CD4-positive, alpha-beta T cell (primary cell): ENCODE measurements at regions of chr12 and their contacts with region 1.

Region 1: DNA sequence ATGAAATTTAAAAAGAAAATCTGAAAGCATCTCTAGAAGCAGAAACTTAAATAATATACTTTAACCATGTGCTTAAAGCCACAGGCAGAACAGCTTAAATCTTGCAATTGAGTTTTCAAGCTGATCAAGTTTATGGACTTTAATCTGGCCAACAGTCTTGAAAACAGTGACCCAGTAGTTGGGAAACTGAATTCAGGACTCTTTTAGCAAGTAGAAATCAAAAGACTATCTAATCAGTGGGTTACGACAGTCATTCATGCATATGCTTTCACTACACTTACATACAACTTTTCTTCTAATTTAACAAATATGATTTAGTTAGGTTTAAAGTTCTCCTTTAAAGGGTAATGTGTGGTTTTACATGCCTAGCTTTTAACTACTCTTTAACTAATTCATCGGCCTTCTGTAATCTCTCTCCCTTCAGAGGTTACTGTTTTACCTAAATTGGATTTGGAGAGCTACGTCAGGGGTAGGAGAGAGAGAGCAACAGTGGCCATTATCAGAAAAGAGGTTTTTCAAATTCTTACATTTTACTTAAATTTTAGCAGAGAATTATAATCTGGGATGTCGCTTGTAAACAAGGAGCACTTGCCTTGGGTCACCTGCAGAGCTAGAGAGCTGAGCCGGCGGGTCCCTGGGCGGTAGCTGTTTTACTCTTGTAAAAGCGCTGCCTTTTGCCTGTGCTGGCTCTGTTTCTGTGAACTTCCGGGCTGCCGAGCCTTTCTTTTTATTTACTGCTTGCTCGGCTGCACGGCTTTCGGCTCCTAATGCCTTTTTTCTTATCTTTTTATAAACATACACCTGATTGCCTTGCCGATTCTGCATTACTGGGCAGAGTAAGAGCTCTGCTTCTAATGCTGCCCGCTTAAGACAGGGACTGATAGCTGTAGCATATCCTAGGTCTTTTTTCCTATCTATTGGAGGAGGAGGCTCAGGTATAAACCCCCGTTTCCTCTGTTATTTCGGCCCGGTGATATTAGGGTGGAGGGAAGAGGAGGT is 17.4 kb upstream of the LYZ start:
- DNase-seq: peak; percentile 49 to 81 (median 66)
- ATAC-seq: peak; percentile 74
- H3K4me3 ChIP-seq: peak overlapping the region; percentile 61
- H3K4me3 Mint-ChIP-seq: peak overlapping the region; percentile 98
- H3K27ac ChIP-seq: peak overlapping the region; percentile 83 to 88
- H3K27ac Mint-ChIP-seq: peak overlapping the region; percentile 100
- H3K4me1 ChIP-seq: peaks cover 34% of the 10 kb centered on the region
- H3K4me1 Mint-ChIP-seq: peaks cover 62% of the 10 kb centered on the region
- H3K27me3 ChIP-seq: no peaks in the 10 kb centered on the region
- H3K27me3 Mint-ChIP-seq: no peaks in the 10 kb centered on the region
- CTCF ChIP-seq: no peak

Region 2: GRCh38 chr12:69254046-69254445 is 76.7 kb before region 1 on chr12:
- CTCF ChIA-PET with region 1: no interaction called
- POLR2A ChIA-PET with region 1: interaction called, 10 read pairs
- intact Hi-C with region 1: no loop called
- DNase-seq: peak in 3 of 14 experiments; percentile 71 to 84 (median 82)
- ATAC-seq: peak; percentile 91
- H3K4me3 ChIP-seq: no peak overlapping the region
- H3K4me3 Mint-ChIP-seq: no peak overlapping the region
- H3K27ac ChIP-seq: peak overlapping the region in 1 of 2 donors; percentile 8
- H3K27ac Mint-ChIP-seq: peak overlapping the region; percentile 19
- H3K4me1 ChIP-seq: no peaks in the 10 kb centered on the region
- H3K4me1 Mint-ChIP-seq: peaks cover 56% of the 10 kb centered on the region
- H3K27me3 ChIP-seq: no peaks in the 10 kb centered on the region
- H3K27me3 Mint-ChIP-seq: no peaks in the 10 kb centered on the region
- CTCF ChIP-seq: peak; percentile 74

Region 3: DNA sequence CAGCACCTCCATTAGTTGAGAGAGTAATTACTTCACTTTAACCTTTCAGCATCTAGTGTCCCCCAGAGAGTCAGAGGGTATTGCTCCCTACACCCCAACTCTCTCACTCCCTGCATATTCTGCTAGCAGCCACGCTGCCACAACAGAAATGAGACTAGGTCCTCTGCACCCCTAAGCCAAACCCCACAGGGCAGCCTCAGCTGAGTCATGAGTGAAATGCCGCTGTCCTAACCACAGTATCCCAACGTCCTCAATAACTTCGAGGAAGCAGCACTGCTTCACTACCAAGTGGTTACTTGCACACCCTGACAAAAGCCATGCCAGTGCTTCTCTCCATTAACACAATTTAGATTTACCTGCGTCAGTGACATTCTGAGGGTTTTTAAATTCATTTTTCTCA is 10.6 kb after region 1 on chr12:
- CTCF ChIA-PET with region 1: interaction called, 4 read pairs
- POLR2A ChIA-PET with region 1: interaction called, 20 read pairs
- intact Hi-C with region 1: no loop called
- DNase-seq: peak in 2 of 14 experiments; percentile 36 to 38
- ATAC-seq: no peak
- H3K4me3 ChIP-seq: no peak overlapping the region
- H3K4me3 Mint-ChIP-seq: no peak overlapping the region
- H3K27ac ChIP-seq: no peak overlapping the region
- H3K27ac Mint-ChIP-seq: no peak overlapping the region
- H3K4me1 ChIP-seq: no peaks in the 10 kb centered on the region
- H3K4me1 Mint-ChIP-seq: no peaks in the 10 kb centered on the region
- H3K27me3 ChIP-seq: no peaks in the 10 kb centered on the region
- H3K27me3 Mint-ChIP-seq: peaks cover 4% of the 10 kb centered on the region
- CTCF ChIP-seq: no peak

Region 4: GRCh38 chr12:69470189-69471075 is 139.7 kb after region 1 on chr12 and contains the start of gene FRS2:
- CTCF ChIA-PET with region 1: no interaction called
- POLR2A ChIA-PET with region 1: interaction called, 20 read pairs
- intact Hi-C with region 1: no loop called
- DNase-seq: peak; percentile 68 to 90 (median 82)
- ATAC-seq: peak; percentile 98
- H3K4me3 ChIP-seq: peak within 1 kb of the TSS; percentile 77
- H3K4me3 Mint-ChIP-seq: peak within 1 kb of the TSS; percentile 100
- H3K27ac ChIP-seq: peak within 1 kb of the TSS; percentile 63 to 72
- H3K27ac Mint-ChIP-seq: peak within 1 kb of the TSS; percentile 92
- H3K4me1 ChIP-seq: peaks cover 12% of the 10 kb centered on the region
- H3K4me1 Mint-ChIP-seq: peaks cover 55% of the 10 kb centered on the region
- H3K27me3 ChIP-seq: no peaks in the 10 kb centered on the region
- H3K27me3 Mint-ChIP-seq: no peaks in the 10 kb centered on the region
- CTCF ChIP-seq: no peak
- total RNA-seq, gene FRS2: 21.7 to 24.9 TPM

Region 5: DNA sequence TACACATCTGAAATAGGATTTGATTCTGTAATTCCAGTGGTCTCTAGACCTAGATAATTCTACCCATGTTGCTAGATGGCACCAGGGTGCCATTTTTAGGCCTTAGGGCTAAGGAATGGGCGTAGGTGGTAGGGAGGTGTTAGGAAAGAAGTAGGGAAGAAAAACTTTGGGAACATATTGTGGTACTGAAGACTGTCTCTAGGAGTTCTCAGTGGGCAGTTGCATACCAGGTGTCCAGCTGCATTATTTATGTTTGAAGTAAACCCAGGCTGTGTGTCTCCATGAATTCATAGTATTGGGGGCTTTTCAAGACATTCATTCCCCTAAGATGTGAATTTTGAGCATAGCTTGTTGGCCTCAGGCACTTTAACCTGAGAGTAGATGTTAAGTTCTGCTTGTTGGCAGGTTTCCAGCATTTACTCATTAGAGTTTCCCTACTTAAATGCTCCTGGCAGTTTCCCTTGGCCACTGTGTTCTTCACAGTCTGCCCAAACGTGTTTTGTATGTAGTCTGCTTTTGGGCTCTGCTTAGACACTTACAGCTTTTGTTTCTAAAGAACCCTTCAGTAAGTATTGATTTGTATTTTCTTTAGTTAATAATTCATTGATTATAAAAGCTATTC is 223.0 kb after region 1 on chr12:
- CTCF ChIA-PET with region 1: no interaction called
- POLR2A ChIA-PET with region 1: no interaction called
- intact Hi-C with region 1: no loop called
- DNase-seq: no peak
- ATAC-seq: no peak
- H3K4me3 ChIP-seq: no peak overlapping the region
- H3K4me3 Mint-ChIP-seq: no peak overlapping the region
- H3K27ac ChIP-seq: no peak overlapping the region
- H3K27ac Mint-ChIP-seq: no peak overlapping the region
- H3K4me1 ChIP-seq: no peaks in the 10 kb centered on the region
- H3K4me1 Mint-ChIP-seq: no peaks in the 10 kb centered on the region
- H3K27me3 ChIP-seq: no peaks in the 10 kb centered on the region
- H3K27me3 Mint-ChIP-seq: no peaks in the 10 kb centered on the region
- CTCF ChIP-seq: no peak

Region 6: DNA sequence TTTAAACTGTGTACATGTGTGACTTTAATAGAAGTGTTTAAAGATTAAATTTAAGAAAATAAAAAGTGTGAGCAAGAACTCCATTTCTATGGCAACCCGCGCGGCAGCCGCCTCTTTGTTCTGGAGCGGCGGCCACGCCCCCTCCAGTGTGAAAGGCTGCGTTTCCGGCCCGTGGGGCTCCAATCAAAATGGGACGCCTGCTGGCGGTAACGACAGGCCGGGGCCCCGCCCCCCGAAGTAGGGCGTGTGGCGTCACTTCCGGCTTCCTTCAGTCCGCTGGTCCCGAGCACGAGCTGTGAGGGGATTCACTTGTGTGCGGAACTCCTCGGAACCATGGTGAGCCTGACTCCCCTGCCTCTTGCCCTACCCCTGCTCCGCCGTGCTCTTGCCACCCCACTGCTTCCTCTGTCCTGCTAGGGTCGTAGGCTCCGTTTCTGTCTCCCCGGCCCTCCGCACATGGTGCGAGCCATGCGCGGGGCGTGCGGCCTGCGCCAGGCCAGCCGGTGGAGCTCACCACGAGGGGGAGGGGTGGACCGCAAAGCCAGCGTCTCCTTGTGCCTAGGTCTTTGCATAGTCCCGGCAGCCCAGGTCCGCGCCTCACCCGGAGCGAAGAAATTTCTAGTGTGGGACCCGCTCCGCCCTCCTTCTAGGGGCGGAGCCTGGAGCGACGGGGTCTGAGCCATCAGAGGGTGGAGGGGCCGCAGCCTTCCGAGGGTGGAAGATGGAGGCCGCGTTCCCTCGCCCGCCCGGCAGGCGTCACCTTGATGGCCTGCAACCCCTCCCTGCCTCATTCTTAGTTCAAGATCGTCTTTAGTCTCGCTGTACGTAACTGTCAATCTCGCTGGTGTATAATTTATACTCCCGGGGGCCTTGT is 254.7 kb after region 1 on chr12 and contains the start of gene CCT2:
- CTCF ChIA-PET with region 1: no interaction called
- POLR2A ChIA-PET with region 1: interaction called, 30 read pairs
- intact Hi-C with region 1: no loop called
- DNase-seq: peak; percentile 92 to 99 (median 96)
- ATAC-seq: peak; percentile 87
- H3K4me3 ChIP-seq: peak within 1 kb of the TSS; percentile 98
- H3K4me3 Mint-ChIP-seq: peak within 1 kb of the TSS; percentile 99
- H3K27ac ChIP-seq: peak within 1 kb of the TSS; percentile 96 to 97
- H3K27ac Mint-ChIP-seq: peak within 1 kb of the TSS; percentile 98
- H3K4me1 ChIP-seq: peaks cover 12% of the 10 kb centered on the region
- H3K4me1 Mint-ChIP-seq: peaks cover 27% of the 10 kb centered on the region
- H3K27me3 ChIP-seq: no peaks in the 10 kb centered on the region
- H3K27me3 Mint-ChIP-seq: no peaks in the 10 kb centered on the region
- CTCF ChIP-seq: peak; percentile 28
- total RNA-seq, gene CCT2: 173 to 177 TPM

Region 7: DNA sequence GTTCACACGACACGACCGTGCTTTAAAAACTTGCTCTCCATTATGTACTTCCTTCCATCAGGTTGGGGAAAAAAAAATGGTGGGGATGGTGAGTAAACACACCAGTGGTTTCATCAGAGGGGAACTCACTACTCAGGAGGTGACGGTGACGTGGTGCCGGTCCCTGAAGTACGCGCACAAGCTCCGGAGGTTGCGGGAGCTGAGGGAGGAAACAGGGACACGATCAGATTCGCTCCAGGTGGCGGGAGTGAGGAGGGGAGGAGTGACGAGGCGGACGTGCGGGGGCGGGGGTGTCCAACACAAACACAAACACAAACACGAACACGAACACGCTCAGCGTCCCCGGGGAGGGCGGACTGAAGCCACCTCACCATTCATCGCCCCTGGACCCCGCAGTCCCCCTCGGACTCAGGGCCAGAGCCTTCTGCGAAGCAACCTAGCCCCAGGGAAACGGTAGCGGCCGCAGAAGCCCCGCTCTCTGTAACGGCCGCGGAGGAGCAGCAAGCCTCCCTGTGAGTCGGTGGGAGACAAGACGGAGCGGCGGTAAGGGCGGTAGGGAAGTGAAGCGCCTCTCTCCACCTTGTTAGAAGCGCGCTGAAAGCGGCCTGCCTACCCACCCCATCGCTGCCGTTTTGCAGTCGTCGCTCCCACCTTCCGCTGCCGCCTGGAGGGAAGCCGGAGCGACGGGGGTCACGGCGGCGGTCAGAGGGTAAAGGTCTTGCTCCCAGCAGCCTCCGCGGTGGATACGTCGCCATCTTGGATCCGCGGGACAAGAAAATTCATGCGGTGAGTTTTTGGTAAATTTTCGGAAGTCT is 912.1 kb after region 1 on chr12 and contains the start of gene CNOT2:
- CTCF ChIA-PET with region 1: no interaction called
- POLR2A ChIA-PET with region 1: interaction called, 11 read pairs
- intact Hi-C with region 1: no loop called
- DNase-seq: peak; percentile 82 to 95 (median 88)
- ATAC-seq: peak; percentile 80
- H3K4me3 ChIP-seq: peak within 1 kb of the TSS; percentile 88
- H3K4me3 Mint-ChIP-seq: peak within 1 kb of the TSS; percentile 99
- H3K27ac ChIP-seq: peak within 1 kb of the TSS; percentile 96 to 98
- H3K27ac Mint-ChIP-seq: peak within 1 kb of the TSS; percentile 97
- H3K4me1 ChIP-seq: peaks cover 12% of the 10 kb centered on the region
- H3K4me1 Mint-ChIP-seq: peaks cover 76% of the 10 kb centered on the region
- H3K27me3 ChIP-seq: no peaks in the 10 kb centered on the region
- H3K27me3 Mint-ChIP-seq: no peaks in the 10 kb centered on the region
- CTCF ChIP-seq: no peak
- total RNA-seq, gene CNOT2: 107 to 121 TPM

Region 8: DNA sequence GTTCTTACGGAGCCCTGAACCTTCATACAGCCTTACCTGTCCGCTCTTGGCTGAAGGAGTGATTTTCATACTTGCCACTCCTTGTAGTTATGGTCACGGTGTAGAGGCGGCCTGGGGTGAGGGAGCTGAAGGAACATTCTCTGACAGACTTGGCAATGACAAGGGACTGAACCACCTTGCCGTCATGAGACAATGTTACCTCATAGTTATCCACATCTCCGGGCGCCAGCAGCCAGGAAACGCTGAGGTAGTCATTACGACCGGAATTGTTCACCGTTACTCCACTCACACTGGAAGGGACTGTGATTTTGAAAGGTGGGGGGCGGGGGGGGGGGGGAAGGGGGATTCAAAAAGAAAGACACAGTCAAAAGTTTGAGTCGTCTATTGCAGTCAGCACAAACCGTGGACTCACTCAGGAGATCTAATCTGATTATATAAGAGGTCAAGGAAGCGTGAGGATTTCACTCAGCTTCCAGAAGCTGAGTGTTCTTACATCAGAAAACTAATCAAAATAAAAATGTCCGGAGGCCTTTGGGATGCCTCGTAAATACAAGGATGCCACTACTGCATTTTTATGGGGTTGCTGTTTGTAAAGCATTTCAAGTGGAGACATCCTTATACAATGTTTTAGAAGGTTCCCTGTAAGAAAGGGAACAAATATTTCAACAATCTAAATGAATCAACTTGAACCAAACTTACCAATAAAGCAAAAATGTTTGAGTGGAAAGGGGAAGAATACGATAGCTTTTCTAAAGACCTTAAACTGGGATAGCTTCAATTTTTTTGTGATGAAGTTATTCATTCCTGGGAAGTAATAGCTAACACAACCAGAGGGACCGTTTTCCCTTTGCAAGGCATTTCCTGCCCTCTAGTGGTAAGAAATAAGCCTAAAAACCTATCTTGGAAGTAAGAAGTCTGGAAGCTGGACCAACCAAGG is 1245.8 kb after region 1 on chr12:
- CTCF ChIA-PET with region 1: no interaction called
- POLR2A ChIA-PET with region 1: no interaction called
- intact Hi-C with region 1: no loop called
- DNase-seq: peak in 4 of 14 experiments; percentile 2 to 64 (median 62)
- ATAC-seq: no peak
- H3K4me3 ChIP-seq: no peak overlapping the region
- H3K4me3 Mint-ChIP-seq: no peak overlapping the region
- H3K27ac ChIP-seq: no peak overlapping the region
- H3K27ac Mint-ChIP-seq: no peak overlapping the region
- H3K4me1 ChIP-seq: no peaks in the 10 kb centered on the region
- H3K4me1 Mint-ChIP-seq: no peaks in the 10 kb centered on the region
- H3K27me3 ChIP-seq: no peaks in the 10 kb centered on the region
- H3K27me3 Mint-ChIP-seq: peaks cover 5% of the 10 kb centered on the region
- CTCF ChIP-seq: peak; percentile 75